ENCODE measurements at regions of chr13 and their contacts with region 1.

Region 1: GRCh38 chr13:32586080-32586900 is at the start of gene PDS5B:
- DNase-seq: peak; percentile 93
- H3K4me3 ChIP-seq: peak within 1 kb of the TSS; percentile 77 to 97 (median 94)
- H3K27ac ChIP-seq: peak within 1 kb of the TSS; percentile 67
- H3K4me1 ChIP-seq: peaks cover 10% of the 10 kb centered on the region
- H3K27me3 ChIP-seq: no peaks in the 10 kb centered on the region
- CTCF ChIP-seq: peak; percentile 37 to 77
- total RNA-seq, gene PDS5B: 14.3 to 22.4 TPM

Region 2: DNA sequence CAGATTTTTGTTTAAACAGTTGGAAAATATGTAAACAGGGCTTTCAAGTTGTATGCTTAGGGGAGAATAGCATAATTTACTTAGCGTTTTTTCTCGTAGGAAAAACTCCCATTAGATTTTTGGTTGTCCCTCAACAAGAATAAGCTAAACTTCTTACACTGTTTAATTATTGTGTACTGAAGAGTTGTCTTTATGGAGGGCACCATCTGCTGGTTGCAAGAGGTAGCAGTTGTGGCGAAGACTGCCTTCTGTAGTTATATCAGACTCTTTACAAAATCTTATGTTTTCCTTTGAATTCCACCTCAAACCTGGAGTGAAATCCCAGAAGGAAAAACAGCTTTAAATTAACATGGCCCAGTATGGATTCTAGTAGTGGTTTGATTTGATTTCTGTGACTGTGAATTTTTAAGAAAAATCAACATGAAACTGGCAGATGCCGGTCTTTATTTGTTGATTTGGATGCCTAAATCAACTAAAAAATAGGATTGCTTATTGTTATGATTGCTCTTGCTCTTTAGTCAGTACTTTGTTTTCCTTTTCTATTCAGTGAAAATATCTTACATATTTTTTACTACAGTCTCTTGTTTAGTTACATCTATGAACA is 53.3 kb after region 1 on chr13:
- CTCF ChIA-PET with region 1: interaction called, 4 read pairs
- dilution Hi-C with region 1: no loop called
- in situ Hi-C with region 1: loop called in 1 of 2 experiments (anchors 10 kb)
- intact Hi-C with region 1: loop called (anchors 1 kb)
- DNase-seq: peak; percentile 26
- H3K4me3 ChIP-seq: no peak overlapping the region
- H3K27ac ChIP-seq: no peak overlapping the region
- H3K4me1 ChIP-seq: no peaks in the 10 kb centered on the region
- H3K27me3 ChIP-seq: no peaks in the 10 kb centered on the region
- CTCF ChIP-seq: peak; percentile 78 to 84

Region 3: DNA sequence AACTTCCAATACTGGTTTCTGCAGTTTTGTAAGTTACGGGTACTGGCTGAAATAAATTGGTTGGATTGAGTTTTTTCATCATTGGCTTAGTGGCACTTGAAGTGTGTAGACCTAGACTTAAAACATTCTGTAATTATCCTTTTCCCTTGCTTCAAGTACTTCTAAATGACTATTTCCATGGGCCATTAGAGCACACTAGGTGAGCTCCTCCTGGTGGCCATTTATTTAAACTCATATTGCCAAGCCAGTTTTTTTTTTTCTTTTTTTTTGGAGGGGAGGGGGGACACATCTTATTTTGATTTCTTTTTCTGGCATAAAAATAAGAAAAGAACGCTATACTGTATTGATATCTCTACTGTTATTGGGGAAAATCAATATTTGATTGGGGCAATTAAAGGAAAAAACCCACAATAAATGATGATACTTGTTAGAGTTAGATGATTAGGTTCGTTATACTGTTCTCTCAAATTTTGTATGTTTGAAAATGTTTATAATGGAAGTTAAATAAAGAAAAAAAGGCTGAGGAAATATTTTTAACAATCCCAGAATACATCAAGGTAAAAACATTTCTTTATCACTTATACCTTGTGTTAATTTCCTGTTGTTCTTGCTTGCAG is 82.8 kb after region 1 on chr13:
- CTCF ChIA-PET with region 1: interaction called, 14 read pairs
- dilution Hi-C with region 1: no loop called
- in situ Hi-C with region 1: no loop called
- intact Hi-C with region 1: loop called (anchors 1 kb)
- DNase-seq: peak; percentile 12
- H3K4me3 ChIP-seq: no peak overlapping the region
- H3K27ac ChIP-seq: no peak overlapping the region
- H3K4me1 ChIP-seq: no peaks in the 10 kb centered on the region
- H3K27me3 ChIP-seq: no peaks in the 10 kb centered on the region
- CTCF ChIP-seq: peak; percentile 65 to 68

Region 4: DNA sequence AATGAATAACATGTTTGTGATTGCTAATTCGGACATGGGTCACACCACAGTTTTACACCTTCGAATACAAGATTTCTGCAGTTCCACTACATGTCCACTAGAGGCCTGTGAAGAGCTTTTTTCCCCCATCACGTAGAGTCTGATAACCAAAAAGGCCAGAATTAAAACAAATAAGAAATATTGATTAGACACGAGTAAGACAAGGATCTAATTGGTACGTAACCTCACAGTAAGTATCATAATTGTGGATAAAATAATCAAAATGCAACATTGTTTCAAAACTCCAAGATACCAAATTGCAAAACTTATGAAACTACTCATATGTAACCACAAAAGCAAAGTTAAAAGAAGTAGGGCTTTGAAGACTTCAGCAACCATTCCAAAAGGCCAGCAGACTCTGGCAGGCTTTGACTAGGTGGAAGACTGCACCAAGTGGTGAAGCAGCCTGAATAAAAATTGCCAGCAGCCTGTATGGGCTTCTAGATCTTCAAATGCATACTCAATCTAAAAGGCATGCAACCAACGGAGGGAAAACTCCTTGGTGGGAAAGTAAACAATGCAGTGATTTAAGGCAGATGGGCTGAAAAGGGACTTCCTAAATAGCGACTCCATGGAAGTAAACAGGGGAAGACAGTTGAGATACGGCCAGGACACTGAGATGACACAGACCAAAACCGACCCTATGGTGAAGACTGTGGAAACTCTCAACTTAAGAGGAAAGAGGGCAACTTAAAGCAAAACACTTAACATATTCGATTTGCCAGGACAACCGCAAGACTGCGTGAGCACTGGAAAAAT is 642.6 kb after region 1 on chr13:
- CTCF ChIA-PET with region 1: no interaction called
- dilution Hi-C with region 1: no loop called
- in situ Hi-C with region 1: no loop called
- intact Hi-C with region 1: loop called (anchors 10 kb)
- DNase-seq: no peak
- H3K4me3 ChIP-seq: no peak overlapping the region
- H3K27ac ChIP-seq: peak overlapping the region; percentile 3
- H3K4me1 ChIP-seq: peaks cover 47% of the 10 kb centered on the region
- H3K27me3 ChIP-seq: no peaks in the 10 kb centered on the region
- CTCF ChIP-seq: peak; percentile 98

Measured in mammary epithelial cell (primary cell).